Colonic mucosa (tissue), 4 donors: ENCODE measurements at regions of chr16 and their contacts with region 1.

Region 1: DNA sequence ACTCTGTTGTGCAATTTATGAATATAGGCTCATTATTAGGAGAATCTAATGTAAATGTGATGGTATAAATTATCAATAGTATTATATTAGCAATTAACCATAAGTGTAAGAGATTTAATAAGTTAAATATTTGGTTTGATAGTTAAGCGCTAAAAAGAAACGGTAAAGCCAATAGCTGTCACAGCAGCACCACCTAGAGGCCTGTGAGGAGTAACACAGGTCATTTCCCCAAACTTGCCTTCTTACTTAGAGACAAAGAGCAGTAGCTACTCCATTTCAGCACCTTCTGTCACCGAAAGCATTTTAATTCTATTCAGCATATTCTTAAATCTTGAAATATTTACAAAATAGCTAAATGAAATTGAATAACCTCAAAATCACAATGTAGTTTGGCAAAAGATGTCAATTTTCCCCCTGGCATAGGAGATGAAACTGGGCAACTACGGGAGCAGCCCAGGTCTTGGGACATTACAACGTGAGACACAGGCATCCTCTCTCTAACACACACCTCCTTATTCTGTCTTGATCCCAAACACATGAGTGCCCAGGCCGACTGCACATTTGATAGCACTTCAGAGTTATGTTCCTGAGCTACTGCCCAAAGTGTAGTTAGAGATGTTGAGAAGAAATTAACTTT is 14.2 kb upstream of the DYNLRB2 start:
- DNase-seq: peak; percentile 54
- H3K4me3 ChIP-seq: no peak overlapping the region
- H3K27ac ChIP-seq: no peak overlapping the region
- H3K4me1 ChIP-seq: no peaks in the 10 kb centered on the region
- H3K27me3 ChIP-seq: no peaks in the 10 kb centered on the region
- CTCF ChIP-seq: peak; percentile 85

Region 2: DNA sequence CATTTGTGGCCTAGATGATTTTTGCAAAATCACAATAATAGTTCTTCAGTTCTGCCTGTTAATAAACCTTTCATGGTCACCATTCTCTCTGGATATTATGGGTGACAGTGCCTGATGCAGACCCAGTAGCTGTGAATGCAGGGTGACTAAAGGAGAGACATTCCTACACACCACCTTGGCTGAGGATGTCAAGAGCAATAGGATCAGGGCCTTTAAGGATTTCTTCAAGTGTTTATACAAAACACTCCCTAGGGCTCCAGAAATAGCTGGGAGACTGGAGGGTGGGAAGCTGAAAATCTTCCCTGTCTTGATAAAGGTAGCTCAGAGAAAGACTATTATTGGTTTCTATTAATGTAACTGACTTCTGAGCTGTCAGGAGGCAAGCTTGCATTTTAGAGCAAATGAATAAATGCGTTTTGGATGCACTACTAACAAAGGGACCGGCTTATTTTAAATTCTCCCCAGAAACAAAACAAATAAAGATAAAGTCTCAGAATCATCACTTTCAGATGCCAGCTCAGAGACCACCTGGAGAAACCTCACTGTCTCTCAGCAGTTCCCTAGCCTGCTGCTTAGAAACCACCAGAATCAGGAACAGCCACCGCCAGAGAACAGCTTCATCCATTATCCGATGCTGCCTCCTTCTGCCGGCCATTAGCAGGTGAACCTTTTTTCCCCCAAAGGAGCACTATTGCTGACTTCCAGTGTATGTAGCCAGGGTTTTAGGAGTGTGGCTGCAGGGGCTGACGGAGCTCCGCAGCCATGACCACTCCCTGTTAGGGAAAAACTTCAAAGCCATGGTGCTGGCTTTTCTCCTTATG is 157.2 kb before region 1 on chr16:
- intact Hi-C with region 1: no loop called
- DNase-seq: peak; percentile 36
- H3K4me3 ChIP-seq: no peak overlapping the region
- H3K27ac ChIP-seq: no peak overlapping the region
- H3K4me1 ChIP-seq: no peaks in the 10 kb centered on the region
- H3K27me3 ChIP-seq: no peaks in the 10 kb centered on the region
- CTCF ChIP-seq: peak; percentile 25

Region 3: DNA sequence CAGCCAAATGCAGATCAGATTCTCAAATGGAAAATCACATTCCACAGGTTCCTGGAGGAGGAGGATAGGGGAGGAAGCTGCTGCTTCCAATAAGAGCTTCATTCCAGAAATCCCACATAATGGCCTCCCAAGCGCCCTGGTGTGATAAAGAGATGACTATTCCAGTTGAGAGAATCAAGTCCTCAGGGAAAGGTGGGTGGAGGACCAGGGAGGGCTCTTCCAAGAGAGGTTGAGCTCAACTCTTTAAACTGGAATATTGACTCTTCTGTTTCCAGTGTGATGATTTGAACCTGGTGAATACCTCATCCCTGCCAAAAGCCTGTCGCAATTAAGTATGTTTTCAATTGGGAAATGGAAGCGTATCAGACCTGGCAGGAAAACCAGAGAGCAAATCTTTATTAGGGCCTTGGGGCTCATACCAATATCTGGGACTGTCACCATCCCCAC is 67.2 kb before region 1 on chr16:
- intact Hi-C with region 1: no loop called
- DNase-seq: no peak
- H3K4me3 ChIP-seq: no peak overlapping the region
- H3K27ac ChIP-seq: no peak overlapping the region
- H3K4me1 ChIP-seq: no peaks in the 10 kb centered on the region
- H3K27me3 ChIP-seq: no peaks in the 10 kb centered on the region
- CTCF ChIP-seq: no peak

Region 4: GRCh38 chr16:80718249-80719220 is 192.0 kb after region 1 on chr16:
- intact Hi-C with region 1: no loop called
- DNase-seq: no peak
- H3K4me3 ChIP-seq: no peak overlapping the region
- H3K27ac ChIP-seq: no peak overlapping the region
- H3K4me1 ChIP-seq: no peaks in the 10 kb centered on the region
- H3K27me3 ChIP-seq: no peaks in the 10 kb centered on the region
- CTCF ChIP-seq: no peak

Region 5: DNA sequence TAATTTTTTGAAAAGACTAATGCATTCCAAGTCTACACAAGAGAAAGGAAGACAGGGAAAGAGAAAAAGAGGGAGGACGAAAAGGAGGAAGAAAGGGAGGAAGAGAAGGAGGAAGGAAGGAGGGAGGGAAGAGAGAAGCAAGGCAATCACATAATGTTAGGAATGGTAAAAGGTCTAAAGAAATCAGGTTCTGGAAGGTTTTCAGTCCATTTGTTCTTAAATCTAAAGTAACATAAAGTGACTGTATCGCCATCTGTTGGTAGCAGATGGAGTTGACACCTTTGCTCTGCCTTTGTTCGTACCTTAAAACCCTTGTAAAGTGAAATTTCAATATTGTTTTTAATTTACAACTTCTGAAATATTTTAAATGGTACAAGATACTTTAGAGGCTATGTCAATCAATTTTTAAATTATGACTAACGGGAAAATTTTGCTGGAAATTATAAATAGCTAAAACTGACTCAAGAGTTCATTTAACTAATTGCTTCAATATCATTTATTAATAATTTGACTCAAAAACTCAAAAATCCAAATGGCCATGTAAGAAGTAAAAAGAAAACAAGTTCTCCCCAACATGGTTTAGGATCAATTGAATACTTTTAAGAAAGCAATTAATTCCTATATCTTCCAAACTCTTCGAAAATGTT is 298.3 kb after region 1 on chr16:
- intact Hi-C with region 1: loop called (anchors 5 kb)
- DNase-seq: peak; percentile 29
- H3K4me3 ChIP-seq: no peak overlapping the region
- H3K27ac ChIP-seq: no peak overlapping the region
- H3K4me1 ChIP-seq: no peaks in the 10 kb centered on the region
- H3K27me3 ChIP-seq: no peaks in the 10 kb centered on the region
- CTCF ChIP-seq: peak; percentile 73